ENCODE measurements at regions of chr3 and their contacts with region 1.

Region 1: DNA sequence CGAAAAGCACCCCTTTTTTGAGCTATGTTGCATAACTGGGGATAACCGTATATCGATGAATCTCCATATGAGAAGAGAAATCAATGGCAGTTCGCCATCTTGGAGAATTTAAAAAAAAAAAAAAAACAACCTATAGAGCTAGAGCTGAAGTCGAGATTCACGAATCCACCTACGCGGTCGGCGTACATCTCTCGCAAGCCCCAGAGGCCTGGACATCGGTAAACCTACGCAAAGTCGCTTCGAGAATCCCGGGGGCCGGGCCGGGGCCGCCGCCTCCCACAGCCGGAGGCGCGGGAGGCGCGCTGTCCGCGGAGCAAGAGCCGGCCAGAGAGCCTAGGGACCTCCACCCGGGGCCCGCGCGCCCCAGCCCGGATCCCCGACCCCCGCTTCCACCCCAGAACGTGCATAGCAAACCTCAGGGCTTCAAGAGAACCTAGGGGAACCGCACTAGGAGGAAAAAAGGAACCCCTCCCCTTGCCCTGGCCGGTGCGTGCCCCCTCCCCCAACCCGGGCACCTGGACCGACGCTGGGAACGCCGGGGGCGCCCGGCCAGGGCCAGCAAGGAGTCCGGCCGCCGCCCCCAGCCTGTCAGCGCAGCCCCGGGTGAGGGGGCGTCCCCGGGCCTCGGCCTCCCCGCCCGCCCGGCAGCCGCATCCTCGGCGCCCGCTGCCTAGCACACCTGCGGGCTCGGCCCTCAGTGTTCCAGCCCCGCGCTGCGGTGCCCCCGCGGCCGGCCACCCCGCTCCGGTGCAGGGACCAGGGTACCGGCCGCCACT is 567 bp downstream of the PFN2 start:
- DNase-seq: peak; percentile 76
- ATAC-seq: peak; percentile 69
- H3K4me3 Mint-ChIP-seq: peak overlapping the region; percentile 71
- H3K27ac Mint-ChIP-seq: peak overlapping the region; percentile 36
- H3K4me1 Mint-ChIP-seq: peaks cover 12% of the 10 kb centered on the region
- H3K27me3 Mint-ChIP-seq: peaks cover 48% of the 10 kb centered on the region

Region 2: GRCh38 chr3:150183678-150184425 is 213.7 kb after region 1 on chr3:
- CTCF ChIA-PET with region 1: interaction called, 40 read pairs
- DNase-seq: peak; percentile 59
- ATAC-seq: peak; percentile 89
- H3K4me3 Mint-ChIP-seq: no peak overlapping the region
- H3K27ac Mint-ChIP-seq: no peak overlapping the region
- H3K4me1 Mint-ChIP-seq: no peaks in the 10 kb centered on the region
- H3K27me3 Mint-ChIP-seq: peaks cover 29% of the 10 kb centered on the region